Activated T-helper 1 cell treated with anti-CD3 and anti-CD28 coated beads, Interleukin-12 subunit alpha, Interleukin-12 subunit beta, Interleukin-2, Interleukin-4 antibody, amounts not matched to agents 30 ng/mL and 10 ng/mL and 1 ng/mL, durations not matched to agents 14 hours and 24 hours and 36 hours (primary cell): ENCODE measurements at regions of chr13 and their contacts with region 1.

Region 1: GRCh38 chr13:30158774-30159445 is 148.4 kb downstream of the KATNAL1 start:
- DNase-seq: no peak
- H3K4me3 Mint-ChIP-seq: peak overlapping the region; percentile 23
- H3K27ac Mint-ChIP-seq: peak overlapping the region; percentile 78
- H3K4me1 Mint-ChIP-seq: peaks cover 43% of the 10 kb centered on the region
- H3K27me3 Mint-ChIP-seq: peaks cover under 1% of the 10 kb centered on the region

Region 2: DNA sequence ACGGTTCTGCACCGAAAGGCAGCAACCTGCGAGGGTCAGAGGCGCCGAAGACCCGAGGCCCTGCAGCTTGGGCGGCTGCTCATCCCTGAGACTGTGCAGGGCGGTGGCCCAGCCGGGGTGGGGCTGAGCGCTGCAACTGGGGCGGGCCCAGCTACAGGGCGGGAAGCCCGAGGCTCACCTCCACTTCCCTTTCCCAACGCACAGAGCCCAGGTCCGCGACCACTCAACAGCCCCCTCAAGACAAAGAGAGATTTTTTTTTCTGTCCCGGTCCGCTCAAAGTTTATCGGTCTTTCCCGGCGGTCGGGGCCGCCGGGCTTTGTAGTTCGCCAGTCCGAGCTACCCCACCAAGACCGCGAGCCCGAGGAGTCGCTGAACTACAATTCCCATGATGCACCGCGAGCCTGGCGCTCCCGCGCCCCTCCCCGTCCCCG is 147.9 kb after region 1 on chr13:
- intact Hi-C with region 1: loop called (anchors 1 kb)
- DNase-seq: peak; percentile 90
- H3K4me3 Mint-ChIP-seq: peak overlapping the region; percentile 88
- H3K27ac Mint-ChIP-seq: peak overlapping the region; percentile 84
- H3K4me1 Mint-ChIP-seq: peaks cover 65% of the 10 kb centered on the region
- H3K27me3 Mint-ChIP-seq: no peaks in the 10 kb centered on the region